HepG2 (cell line): ENCODE measurements at regions of chr16 and their contacts with region 1.

Region 1: GRCh38 chr16:9008601-9009260 is 45.0 kb upstream of the USP7 start:
- DNase-seq: peak; percentile 85
- ATAC-seq: peak; percentile 94
- H3K4me3 ChIP-seq: peak overlapping the region; percentile 57 to 78 (median 61)
- H3K27ac ChIP-seq: no peak overlapping the region
- H3K4me1 ChIP-seq: peaks cover 54% of the 10 kb centered on the region
- H3K27me3 ChIP-seq: peaks cover 2 to 8% of the 10 kb centered on the region in 2 experiments; a peak in 3 of 5 replicates
- CTCF ChIP-seq: peak; percentile 100
- EP300 ChIP-seq: peak in 1 of 2 experiments; percentile 26; a peak in 1 of 4 replicates
- POLR2A ChIP-seq: no peak
- RAD21 ChIP-seq: peak; percentile 100

Region 2: DNA sequence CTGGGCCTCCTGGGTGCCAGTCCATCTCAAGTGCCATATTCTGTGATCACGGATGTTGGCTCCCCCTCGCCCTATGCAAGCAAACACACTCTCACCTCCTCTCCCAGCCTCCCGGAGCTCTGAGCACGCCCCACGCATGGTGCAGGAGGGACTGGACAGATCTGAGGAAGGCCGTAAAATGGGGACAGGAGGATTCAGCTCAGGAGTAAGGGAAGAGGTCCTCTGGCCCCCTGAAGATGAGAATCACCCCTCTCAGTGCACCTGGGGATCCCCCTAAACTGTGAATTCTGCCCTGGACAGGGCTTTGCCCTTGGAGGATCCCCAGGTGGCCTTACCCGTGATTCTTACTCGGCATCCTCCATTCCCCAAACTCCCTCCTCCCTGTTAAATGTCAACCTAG is 226.9 kb before region 1 on chr16:
- CTCF ChIA-PET with region 1: no interaction called
- POLR2A ChIA-PET with region 1: no interaction called
- in situ Hi-C with region 1: no loop called
- intact Hi-C with region 1: no loop called
- DNase-seq: no peak
- ATAC-seq: no peak
- H3K4me3 ChIP-seq: no peak overlapping the region
- H3K27ac ChIP-seq: no peak overlapping the region
- H3K4me1 ChIP-seq: no peaks in the 10 kb centered on the region
- H3K27me3 ChIP-seq: no peaks in the 10 kb centered on the region
- CTCF ChIP-seq: no peak
- EP300 ChIP-seq: no peak
- POLR2A ChIP-seq: no peak
- RAD21 ChIP-seq: no peak

Region 3: GRCh38 chr16:8806272-8806983 is 202.3 kb before region 1 on chr16:
- CTCF ChIA-PET with region 1: no interaction called
- POLR2A ChIA-PET with region 1: no interaction called
- in situ Hi-C with region 1: no loop called
- intact Hi-C with region 1: no loop called
- DNase-seq: no peak
- ATAC-seq: no peak
- H3K4me3 ChIP-seq: no peak overlapping the region
- H3K27ac ChIP-seq: no peak overlapping the region
- H3K4me1 ChIP-seq: peaks cover under 1% of the 10 kb centered on the region
- H3K27me3 ChIP-seq: no peaks in the 10 kb centered on the region
- CTCF ChIP-seq: no peak
- EP300 ChIP-seq: no peak
- POLR2A ChIP-seq: no peak
- RAD21 ChIP-seq: no peak

Region 4: GRCh38 chr16:8868416-8869211 is 140.1 kb before region 1 on chr16 and contains the start of gene CARHSP1:
- CTCF ChIA-PET with region 1: no interaction called
- POLR2A ChIA-PET with region 1: interaction called, 11 read pairs
- in situ Hi-C with region 1: no loop called
- intact Hi-C with region 1: no loop called
- DNase-seq: peak; percentile 93
- ATAC-seq: peak; percentile 63
- H3K4me3 ChIP-seq: peak within 1 kb of the TSS; percentile 82 to 97 (median 87)
- H3K27ac ChIP-seq: peak within 1 kb of the TSS; percentile 95
- H3K4me1 ChIP-seq: peaks cover 76% of the 10 kb centered on the region
- H3K27me3 ChIP-seq: no peaks in the 10 kb centered on the region; a peak in 1 of 5 replicates
- CTCF ChIP-seq: no peak
- EP300 ChIP-seq: peak in 1 of 2 experiments; percentile 4; a peak in 1 of 4 replicates
- POLR2A ChIP-seq: peak in 1 of 2 experiments; percentile 88; a peak in 2 of 4 replicates
- RAD21 ChIP-seq: 0 out of 2 replicates have a peak, but pooled peaks have one; percentile 38
- total RNA-seq, gene CARHSP1: 345 and 349 TPM in 2 replicates

Region 5: GRCh38 chr16:8936421-8936820 is 72.3 kb before region 1 on chr16:
- CTCF ChIA-PET with region 1: interaction called, 30 read pairs
- POLR2A ChIA-PET with region 1: interaction called, 17 read pairs
- in situ Hi-C with region 1: no loop called
- intact Hi-C with region 1: loop called (anchors 1 kb)
- DNase-seq: peak; percentile 70
- ATAC-seq: peak; percentile 94
- H3K4me3 ChIP-seq: no peak overlapping the region
- H3K27ac ChIP-seq: no peak overlapping the region
- H3K4me1 ChIP-seq: peaks cover 64% of the 10 kb centered on the region
- H3K27me3 ChIP-seq: no peaks in the 10 kb centered on the region
- CTCF ChIP-seq: peak; percentile 79
- EP300 ChIP-seq: no peak
- POLR2A ChIP-seq: no peak
- RAD21 ChIP-seq: peak; percentile 45

Region 6: DNA sequence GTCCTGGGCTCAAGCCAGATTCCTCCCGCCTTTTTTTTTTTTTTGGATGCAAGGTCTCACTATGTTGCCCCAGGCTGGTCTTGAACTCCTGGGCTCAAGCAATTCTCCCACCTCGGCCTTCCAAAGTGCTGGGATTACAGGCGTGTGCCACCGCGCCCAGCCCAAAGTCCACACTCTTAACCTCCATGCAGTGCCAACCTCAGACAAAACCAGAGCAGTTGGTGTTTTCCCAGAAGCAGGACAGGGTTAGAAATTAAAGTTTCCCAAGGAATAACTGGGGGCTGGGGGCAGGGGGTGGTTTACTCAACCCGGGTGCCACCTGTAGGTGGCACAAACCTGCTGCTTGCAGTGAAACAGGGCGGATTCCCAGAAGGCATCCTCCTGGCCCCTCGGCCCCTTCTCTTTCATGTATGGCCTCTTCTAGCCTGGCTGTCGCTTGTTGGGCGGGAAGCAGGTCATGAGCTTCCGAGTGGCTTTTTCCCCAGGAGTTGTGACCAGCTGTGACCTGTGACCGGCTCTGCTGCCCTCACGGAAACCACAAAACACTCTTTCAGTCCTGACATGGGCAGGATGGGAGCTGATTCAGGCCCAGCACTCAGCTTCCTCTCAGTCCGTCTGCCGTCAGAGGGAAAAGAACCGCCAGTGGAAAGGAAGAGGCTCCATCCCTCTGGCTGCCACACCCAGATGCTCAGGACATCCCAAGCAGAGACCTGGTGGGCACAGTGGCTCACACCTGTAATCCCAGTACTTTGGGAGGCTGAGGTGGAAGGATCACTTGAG is 19.4 kb before region 1 on chr16:
- CTCF ChIA-PET with region 1: no interaction called
- POLR2A ChIA-PET with region 1: interaction called, 42 read pairs
- in situ Hi-C with region 1: no loop called
- intact Hi-C with region 1: loop called (anchors 1 kb)
- DNase-seq: peak; percentile 88
- ATAC-seq: peak; percentile 37
- H3K4me3 ChIP-seq: peak overlapping the region in 2 of 3 experiments; percentile 8 to 45; a peak in 2 of 6 replicates
- H3K27ac ChIP-seq: peak overlapping the region; percentile 83
- H3K4me1 ChIP-seq: peaks cover 78% of the 10 kb centered on the region
- H3K27me3 ChIP-seq: no peaks in the 10 kb centered on the region
- CTCF ChIP-seq: no peak; the same call in 1 of the 2 replicates
- EP300 ChIP-seq: no peak; a peak in 1 of 4 replicates
- POLR2A ChIP-seq: no peak
- RAD21 ChIP-seq: peak; percentile 38; the same call in 1 of the 2 replicates

Region 7: GRCh38 chr16:9072806-9073341 is 64.1 kb after region 1 on chr16:
- CTCF ChIA-PET with region 1: no interaction called
- POLR2A ChIA-PET with region 1: no interaction called
- in situ Hi-C with region 1: no loop called
- intact Hi-C with region 1: no loop called
- DNase-seq: no peak
- ATAC-seq: no peak
- H3K4me3 ChIP-seq: peak overlapping the region in 1 of 3 experiments; percentile 24; a peak in 1 of 6 replicates
- H3K27ac ChIP-seq: no peak overlapping the region
- H3K4me1 ChIP-seq: peaks cover 30% of the 10 kb centered on the region
- H3K27me3 ChIP-seq: no peaks in the 10 kb centered on the region
- CTCF ChIP-seq: no peak
- EP300 ChIP-seq: no peak
- POLR2A ChIP-seq: no peak
- RAD21 ChIP-seq: no peak

Region 8: DNA sequence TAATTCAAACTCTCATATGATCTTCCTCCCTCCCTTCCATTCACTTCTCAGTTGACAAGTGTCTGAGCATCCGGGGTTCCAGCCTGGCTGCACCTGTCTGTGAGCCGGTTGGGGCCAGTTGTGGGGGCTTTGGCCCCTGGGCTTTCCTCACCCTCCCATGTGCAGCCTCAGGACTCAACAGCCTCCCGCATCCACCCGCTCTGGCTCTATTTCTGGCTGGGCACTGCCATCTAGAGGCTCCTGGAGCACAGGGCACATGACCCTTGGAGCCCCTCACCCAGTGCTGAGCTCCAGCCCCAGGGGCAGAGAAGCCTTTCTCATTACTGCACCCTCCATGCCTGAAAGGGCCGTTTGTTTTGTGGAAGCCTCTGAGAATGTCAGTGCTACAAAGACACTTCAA is 126.0 kb after region 1 on chr16:
- CTCF ChIA-PET with region 1: interaction called, 9 read pairs
- POLR2A ChIA-PET with region 1: no interaction called
- in situ Hi-C with region 1: no loop called
- intact Hi-C with region 1: loop called (anchors 2 kb)
- DNase-seq: peak; percentile 79
- ATAC-seq: peak; percentile 88
- H3K4me3 ChIP-seq: no peak overlapping the region
- H3K27ac ChIP-seq: no peak overlapping the region
- H3K4me1 ChIP-seq: peaks cover 27% of the 10 kb centered on the region
- H3K27me3 ChIP-seq: peaks cover 6 to 11% of the 10 kb centered on the region in 2 experiments; a peak in 3 of 5 replicates
- CTCF ChIP-seq: peak; percentile 98
- EP300 ChIP-seq: no peak
- POLR2A ChIP-seq: no peak
- RAD21 ChIP-seq: peak; percentile 95